Naive thymus-derived CD4-positive, alpha-beta T cell (primary cell): ENCODE measurements at regions of chr4 and their contacts with region 1.

Region 1: DNA sequence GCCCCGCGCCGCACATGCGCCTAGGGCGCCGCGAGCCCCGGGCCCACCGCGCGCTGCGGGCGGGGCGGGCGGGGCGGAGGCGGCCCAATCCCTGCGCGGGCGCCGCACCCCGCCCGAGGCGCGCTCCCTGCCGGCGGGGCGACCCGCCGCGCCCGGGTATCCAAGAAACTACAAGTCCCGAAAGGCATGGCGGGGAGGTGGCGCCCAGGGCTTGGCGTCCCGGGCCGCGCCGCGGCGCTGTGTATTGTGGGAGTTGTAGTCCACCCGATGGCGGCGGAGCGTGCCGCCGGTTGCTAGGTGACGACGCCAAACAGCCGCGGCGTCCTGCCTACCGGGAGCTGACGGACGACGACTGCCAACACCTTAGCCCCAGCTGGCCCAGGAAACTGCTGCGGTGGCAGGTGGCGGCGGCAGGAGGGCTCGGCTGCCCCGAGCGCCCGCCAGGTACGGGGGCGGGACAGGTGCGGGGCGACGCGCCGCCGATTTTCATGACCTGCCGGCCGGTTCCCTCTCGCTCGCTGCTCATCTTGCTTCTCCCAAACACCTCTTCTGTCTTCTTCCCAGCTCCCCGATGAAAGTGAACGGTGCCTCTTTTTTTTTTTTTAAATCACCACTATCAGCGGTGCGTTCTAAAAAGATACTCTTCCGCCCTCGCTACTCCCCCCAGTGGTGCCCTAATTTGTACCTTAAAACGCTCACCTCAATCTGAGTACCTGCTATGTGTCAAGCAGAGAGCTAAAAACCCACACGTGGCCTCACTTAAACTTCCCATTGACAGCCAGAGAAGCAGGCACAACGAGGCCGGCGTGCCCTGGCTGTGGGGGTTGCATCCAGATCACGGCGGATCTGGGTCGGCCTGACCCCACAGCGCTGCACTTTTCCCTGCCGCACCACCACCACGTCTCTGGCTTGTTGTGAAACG is at the start of gene CFAP99:
- DNase-seq: peak; percentile 89 to 97 (median 93)
- ATAC-seq: peak; percentile 95
- H3K4me3 ChIP-seq: peak within 1 kb of the TSS; percentile 70
- H3K4me3 Mint-ChIP-seq: peak within 1 kb of the TSS; percentile 85 to 98 (median 92)
- H3K27ac ChIP-seq: peak within 1 kb of the TSS; percentile 73
- H3K27ac Mint-ChIP-seq: peak within 1 kb of the TSS; percentile 81 to 98 (median 90)
- H3K4me1 ChIP-seq: peaks cover 24 to 28% of the 10 kb centered on the region in 2 donors
- H3K4me1 Mint-ChIP-seq: peaks cover 33 to 46% (median 40%) of the 10 kb centered on the region in 7 donors
- H3K27me3 ChIP-seq: no peaks in the 10 kb centered on the region
- H3K27me3 Mint-ChIP-seq: peaks cover 8 to 67% (median 13%) of the 10 kb centered on the region in 5 donors
- total RNA-seq, gene CFAP99: 0.12 to 0.27 TPM in 2 of 5 experiments, not detected in the others

Region 2: DNA sequence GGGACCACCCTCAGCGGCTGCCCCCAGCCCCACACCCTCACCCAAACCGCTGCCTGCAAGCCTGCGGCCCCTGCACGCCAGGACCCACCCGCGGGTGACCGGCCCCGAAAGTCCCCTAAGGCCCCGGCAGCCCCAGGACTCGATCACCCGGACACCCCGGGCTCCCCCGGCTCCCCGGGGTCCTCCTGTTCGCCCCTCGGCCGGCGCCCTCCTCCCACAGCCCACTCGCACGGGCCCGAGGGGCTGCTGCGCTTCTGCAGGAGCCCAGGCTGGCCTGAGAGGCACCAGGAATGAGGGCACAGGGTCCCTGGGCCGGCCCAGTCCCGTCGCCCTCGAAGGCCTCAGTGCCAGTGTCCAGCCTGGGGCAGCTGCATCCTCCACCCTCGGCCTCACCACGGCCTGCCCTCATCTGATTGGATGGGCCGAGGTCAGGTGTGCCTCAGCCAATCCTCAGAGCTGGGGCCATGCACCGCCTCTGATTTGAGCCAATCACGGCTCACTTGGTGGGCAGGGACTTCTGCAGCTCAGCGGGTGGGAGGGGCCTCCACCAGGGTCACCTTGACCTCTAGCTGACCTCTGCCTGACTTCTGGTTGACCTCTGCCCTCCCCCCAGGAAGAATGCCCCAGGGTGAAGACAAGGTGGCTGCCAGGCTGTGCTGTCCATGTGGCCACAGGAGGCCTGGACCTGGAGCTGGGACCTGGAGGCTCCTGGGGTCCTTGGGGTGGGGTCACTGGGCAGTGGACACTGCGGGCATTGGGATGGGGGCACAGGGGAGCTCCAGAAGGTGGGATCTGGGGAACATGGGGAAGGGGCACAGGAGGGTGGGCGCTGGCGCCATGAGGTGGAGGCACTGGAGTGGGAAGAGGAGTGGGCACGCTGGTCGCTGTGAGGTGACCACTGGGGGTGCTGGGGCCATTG is 915.1 kb before region 1 on chr4:
- CTCF ChIA-PET with region 1: no interaction called
- POLR2A ChIA-PET with region 1: no interaction called
- intact Hi-C with region 1: no loop called
- DNase-seq: peak in 1 of 9 donors; percentile 9
- ATAC-seq: no peak
- H3K4me3 ChIP-seq: no peak overlapping the region
- H3K4me3 Mint-ChIP-seq: no peak overlapping the region
- H3K27ac ChIP-seq: no peak overlapping the region
- H3K27ac Mint-ChIP-seq: no peak overlapping the region
- H3K4me1 ChIP-seq: no peaks in the 10 kb centered on the region
- H3K4me1 Mint-ChIP-seq: peaks cover 0 to 3% (median 0%) of the 10 kb centered on the region in 7 donors
- H3K27me3 ChIP-seq: no peaks in the 10 kb centered on the region
- H3K27me3 Mint-ChIP-seq: peaks cover 0 to 16% (median 0%) of the 10 kb centered on the region in 5 donors

Region 3: GRCh38 chr4:1712216-1713002 is 706.5 kb before region 1 on chr4 and contains the start of gene SLBP:
- CTCF ChIA-PET with region 1: no interaction called
- POLR2A ChIA-PET with region 1: no interaction called
- intact Hi-C with region 1: loop called in 1 of 2 experiments (anchors 2 kb)
- DNase-seq: peak; percentile 98 to 99 (median 98)
- ATAC-seq: peak; percentile 92
- H3K4me3 ChIP-seq: peak within 1 kb of the TSS; percentile 100
- H3K4me3 Mint-ChIP-seq: peak within 1 kb of the TSS; percentile 89 to 98 (median 94)
- H3K27ac ChIP-seq: peak within 1 kb of the TSS; percentile 99
- H3K27ac Mint-ChIP-seq: peak within 1 kb of the TSS; percentile 90 to 98 (median 94)
- H3K4me1 ChIP-seq: peaks cover 32 to 34% of the 10 kb centered on the region in 2 donors
- H3K4me1 Mint-ChIP-seq: peaks cover 11 to 67% (median 59%) of the 10 kb centered on the region in 7 donors
- H3K27me3 ChIP-seq: no peaks in the 10 kb centered on the region
- H3K27me3 Mint-ChIP-seq: no peaks in the 10 kb centered on the region
- total RNA-seq, gene SLBP: 29.5 to 103 (median 30.3) TPM

Region 4: GRCh38 chr4:2220016-2220630 is 198.8 kb before region 1 on chr4:
- CTCF ChIA-PET with region 1: interaction called, 5 read pairs
- POLR2A ChIA-PET with region 1: no interaction called
- intact Hi-C with region 1: loop called in 1 of 2 experiments (anchors 1 kb)
- DNase-seq: peak; percentile 61 to 84 (median 76)
- ATAC-seq: peak; percentile 96
- H3K4me3 ChIP-seq: no peak overlapping the region
- H3K4me3 Mint-ChIP-seq: no peak overlapping the region
- H3K27ac ChIP-seq: no peak overlapping the region
- H3K27ac Mint-ChIP-seq: peak overlapping the region in 2 of 9 donors; percentile 6 to 29
- H3K4me1 ChIP-seq: peaks cover 0 to 7% of the 10 kb centered on the region in 2 donors
- H3K4me1 Mint-ChIP-seq: peaks cover 0 to 17% (median 6%) of the 10 kb centered on the region in 7 donors
- H3K27me3 ChIP-seq: no peaks in the 10 kb centered on the region
- H3K27me3 Mint-ChIP-seq: no peaks in the 10 kb centered on the region

Region 5: DNA sequence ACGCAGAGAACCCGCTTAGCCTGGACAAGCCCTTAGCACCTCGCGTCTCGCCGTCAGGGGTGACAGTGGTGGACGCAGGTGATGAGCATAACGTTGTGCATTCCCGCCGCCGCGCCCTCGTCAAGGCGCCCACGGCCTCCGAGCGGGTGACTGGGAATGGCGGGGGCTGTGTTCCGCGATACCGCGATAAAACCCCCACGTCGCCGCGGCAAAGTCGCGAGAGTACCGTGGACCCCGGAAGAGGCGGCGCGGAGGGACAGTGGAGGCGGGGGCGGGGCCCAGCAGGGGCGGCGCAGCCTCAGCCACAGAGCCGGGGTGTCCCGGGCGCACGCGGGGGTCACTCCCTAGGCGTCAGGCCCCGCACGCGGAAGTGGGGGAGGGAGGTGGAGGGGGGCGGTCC is 54.3 kb before region 1 on chr4:
- CTCF ChIA-PET with region 1: no interaction called
- POLR2A ChIA-PET with region 1: interaction called, 4 read pairs
- intact Hi-C with region 1: loop called in 1 of 2 experiments (anchors 1 kb)
- DNase-seq: peak; percentile 49 to 74 (median 61)
- ATAC-seq: peak; percentile 89
- H3K4me3 ChIP-seq: peak overlapping the region; percentile 79
- H3K4me3 Mint-ChIP-seq: peak overlapping the region; percentile 37 to 88 (median 78)
- H3K27ac ChIP-seq: peak overlapping the region; percentile 81
- H3K27ac Mint-ChIP-seq: peak overlapping the region in 8 of 9 donors; percentile 53 to 93 (median 81)
- H3K4me1 ChIP-seq: peaks cover 9 to 12% of the 10 kb centered on the region in 2 donors
- H3K4me1 Mint-ChIP-seq: peaks cover 0 to 31% (median 9%) of the 10 kb centered on the region in 7 donors
- H3K27me3 ChIP-seq: no peaks in the 10 kb centered on the region
- H3K27me3 Mint-ChIP-seq: no peaks in the 10 kb centered on the region

Region 6: DNA sequence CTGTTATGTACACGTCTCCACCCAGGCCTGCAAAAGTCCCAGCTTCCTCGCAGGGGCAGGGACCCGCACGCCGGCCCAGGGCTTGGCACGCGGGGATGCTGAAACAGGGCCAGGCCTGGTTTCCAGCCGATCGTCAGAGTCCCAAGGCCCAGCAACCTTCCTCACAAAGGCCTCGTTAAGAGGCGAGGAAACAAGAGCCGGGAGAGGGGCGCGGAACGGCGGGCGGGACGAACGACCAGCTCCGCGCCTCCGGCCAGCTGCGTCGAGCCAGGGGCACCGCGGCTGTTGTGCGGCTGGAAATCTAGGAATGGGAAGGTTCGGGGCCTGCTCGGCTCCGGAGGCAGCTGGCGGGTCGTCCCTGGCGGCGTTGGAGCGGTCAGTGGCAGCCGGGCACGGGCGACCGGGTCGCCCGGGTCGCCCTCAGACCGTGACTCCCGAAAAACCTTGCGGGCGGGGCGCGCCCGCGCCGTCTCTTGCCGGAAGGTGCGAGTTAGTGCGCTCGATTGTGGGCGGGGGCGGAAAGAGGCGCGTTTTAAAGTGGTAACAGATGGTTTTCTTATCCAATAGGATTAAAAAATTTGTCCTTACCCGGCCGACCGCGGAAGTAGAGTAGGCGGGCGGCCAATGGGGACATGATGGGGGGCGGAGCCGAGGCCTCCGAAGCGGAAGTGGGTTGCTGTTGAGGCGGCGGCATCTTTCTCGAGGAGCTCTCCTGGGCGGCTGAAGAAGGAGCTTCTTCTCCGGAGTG is 49.7 kb after region 1 on chr4 and contains the start of gene RNF4:
- CTCF ChIA-PET with region 1: no interaction called
- POLR2A ChIA-PET with region 1: interaction called, 11 read pairs
- intact Hi-C with region 1: loop called (anchors 1 kb)
- DNase-seq: peak; percentile 77 to 97 (median 96)
- ATAC-seq: peak; percentile 93
- H3K4me3 ChIP-seq: peak within 1 kb of the TSS; percentile 70
- H3K4me3 Mint-ChIP-seq: peak within 1 kb of the TSS; percentile 90 to 98 (median 95)
- H3K27ac ChIP-seq: peak within 1 kb of the TSS; percentile 94
- H3K27ac Mint-ChIP-seq: peak within 1 kb of the TSS; percentile 95 to 98 (median 98)
- H3K4me1 ChIP-seq: peaks cover 31 to 37% of the 10 kb centered on the region in 2 donors
- H3K4me1 Mint-ChIP-seq: peaks cover 40 to 66% (median 53%) of the 10 kb centered on the region in 7 donors
- H3K27me3 ChIP-seq: no peaks in the 10 kb centered on the region
- H3K27me3 Mint-ChIP-seq: peaks cover 0 to 6% (median 0%) of the 10 kb centered on the region in 5 donors
- total RNA-seq, gene RNF4: 80.7 to 101 (median 91.8) TPM

Region 7: GRCh38 chr4:2963175-2963965 is 544.5 kb after region 1 on chr4 and contains the starts of genes GRK4 and NOP14:
- CTCF ChIA-PET with region 1: no interaction called
- POLR2A ChIA-PET with region 1: interaction called, 3 read pairs
- intact Hi-C with region 1: loop called in 1 of 2 experiments (anchors 2 kb)
- DNase-seq: peak; percentile 91 to 98 (median 96)
- ATAC-seq: peak; percentile 97
- H3K4me3 ChIP-seq: peak within 1 kb of the TSS; percentile 98
- H3K4me3 Mint-ChIP-seq: peak within 1 kb of the TSS; percentile 82 to 95 (median 90)
- H3K27ac ChIP-seq: peak within 1 kb of the TSS; percentile 84
- H3K27ac Mint-ChIP-seq: peak within 1 kb of the TSS; percentile 67 to 93 (median 85)
- H3K4me1 ChIP-seq: peaks cover 18 to 19% of the 10 kb centered on the region in 2 donors
- H3K4me1 Mint-ChIP-seq: peaks cover 20 to 42% (median 35%) of the 10 kb centered on the region in 7 donors
- H3K27me3 ChIP-seq: no peaks in the 10 kb centered on the region
- H3K27me3 Mint-ChIP-seq: peaks cover 0 to 2% (median 0%) of the 10 kb centered on the region in 5 donors
- total RNA-seq, gene GRK4: 1.7 to 4.0 (median 2.8) TPM
- total RNA-seq, gene NOP14: 23.1 to 59.8 (median 43.9) TPM